MCF 10A (cell line): ENCODE measurements at regions of chr3 and their contacts with region 1.

Region 1: GRCh38 chr3:94303897-94304296 is 241.0 kb downstream of the NSUN3 start:
- DNase-seq: peak; percentile 15
- H3K4me3 Mint-ChIP-seq: no peak overlapping the region
- H3K27ac Mint-ChIP-seq: no peak overlapping the region
- H3K4me1 Mint-ChIP-seq: no peaks in the 10 kb centered on the region
- H3K27me3 Mint-ChIP-seq: no peaks in the 10 kb centered on the region
- CTCF ChIP-seq: no peak

Region 2: GRCh38 chr3:94291686-94292085 is 12.2 kb before region 1 on chr3:
- CTCF ChIA-PET with region 1: interaction called, 28 read pairs
- POLR2A ChIA-PET with region 1: interaction called, 7 read pairs
- intact Hi-C with region 1: no loop called
- DNase-seq: no peak
- H3K4me3 Mint-ChIP-seq: no peak overlapping the region
- H3K27ac Mint-ChIP-seq: no peak overlapping the region
- H3K4me1 Mint-ChIP-seq: peaks cover 6% of the 10 kb centered on the region
- H3K27me3 Mint-ChIP-seq: no peaks in the 10 kb centered on the region
- CTCF ChIP-seq: no peak

Region 3: GRCh38 chr3:94716326-94717010 is 412.6 kb after region 1 on chr3:
- CTCF ChIA-PET with region 1: interaction called, 3 read pairs
- POLR2A ChIA-PET with region 1: no interaction called
- intact Hi-C with region 1: loop called (anchors 1 kb)
- DNase-seq: peak; percentile 40
- H3K4me3 Mint-ChIP-seq: no peak overlapping the region
- H3K27ac Mint-ChIP-seq: no peak overlapping the region
- H3K4me1 Mint-ChIP-seq: no peaks in the 10 kb centered on the region
- H3K27me3 Mint-ChIP-seq: peaks cover 70% of the 10 kb centered on the region
- CTCF ChIP-seq: peak; percentile 10